ENCODE measurements at regions of chr16 and their contacts with region 1.

Region 1: GRCh38 chr16:27235055-27235937 is 32.0 kb downstream of the KDM8 start:
- DNase-seq: peak; percentile 66 to 97
- ATAC-seq: peak; percentile 43 to 68 (median 52)
- H3K4me3 ChIP-seq: no peak overlapping the region
- H3K4me3 Mint-ChIP-seq: peak overlapping the region; percentile 85
- H3K27ac ChIP-seq: peak overlapping the region; percentile 99
- H3K27ac Mint-ChIP-seq: peak overlapping the region; percentile 94 to 100
- H3K4me1 ChIP-seq: peaks cover 98% of the 10 kb centered on the region
- H3K4me1 Mint-ChIP-seq: peaks cover 75 to 77% of the 10 kb centered on the region in 2 donors
- H3K27me3 ChIP-seq: no peaks in the 10 kb centered on the region
- H3K27me3 Mint-ChIP-seq: no peaks in the 10 kb centered on the region
- CTCF ChIP-seq: peak; percentile 90

Region 2: DNA sequence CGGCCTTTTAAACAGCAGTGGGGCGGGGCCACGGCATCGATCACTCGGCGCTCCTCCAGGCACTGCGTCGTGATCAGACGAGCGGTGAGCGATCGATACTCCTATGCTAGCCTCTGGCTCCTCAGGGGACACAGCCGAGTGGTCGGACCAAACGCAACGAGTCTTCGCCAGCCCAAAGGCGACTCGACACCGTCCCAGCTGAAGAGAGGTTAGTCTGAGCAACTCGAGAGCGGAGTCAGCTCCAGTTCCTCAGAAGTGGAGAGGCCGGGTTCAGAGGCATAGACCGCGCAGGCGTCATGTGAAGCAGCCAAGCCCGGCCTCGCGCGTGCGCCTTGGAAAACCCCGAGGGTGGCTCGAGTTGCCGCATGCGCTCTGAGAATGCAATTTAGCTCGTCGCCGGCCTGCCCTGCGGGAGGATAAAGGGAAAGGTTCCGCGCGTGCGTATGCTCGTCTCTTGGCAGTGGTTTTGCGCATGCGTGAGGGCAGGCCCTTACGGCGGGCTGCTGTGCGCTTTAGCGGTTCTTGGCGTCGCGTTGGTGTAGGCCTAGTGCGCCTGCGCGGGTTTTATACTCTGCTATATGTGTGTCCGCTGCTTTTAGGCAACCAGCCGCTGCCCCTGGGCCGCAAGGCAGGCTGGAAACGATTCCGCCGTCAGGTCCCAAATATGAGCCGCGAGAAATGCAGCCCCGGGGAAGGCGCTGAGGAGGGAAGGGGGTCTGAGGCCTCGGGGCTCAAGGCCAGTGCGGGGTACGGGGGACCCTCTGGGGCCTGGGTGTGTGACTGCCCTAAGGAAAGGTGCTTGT is 31.7 kb before region 1 on chr16 and contains the start of gene KDM8:
- intact Hi-C with region 1: loop called (anchors 2 kb)
- DNase-seq: peak; percentile 98 to 100
- ATAC-seq: peak; percentile 80 to 92 (median 86)
- H3K4me3 ChIP-seq: peak within 1 kb of the TSS; percentile 97
- H3K4me3 Mint-ChIP-seq: peak within 1 kb of the TSS; percentile 97
- H3K27ac ChIP-seq: peak within 1 kb of the TSS; percentile 99
- H3K27ac Mint-ChIP-seq: peak within 1 kb of the TSS; percentile 96 to 98
- H3K4me1 ChIP-seq: peaks cover 36% of the 10 kb centered on the region
- H3K4me1 Mint-ChIP-seq: peaks cover 46 to 52% of the 10 kb centered on the region in 2 donors
- H3K27me3 ChIP-seq: no peaks in the 10 kb centered on the region
- H3K27me3 Mint-ChIP-seq: no peaks in the 10 kb centered on the region
- CTCF ChIP-seq: no peak
- total RNA-seq, gene KDM8: 11.4 to 17.9 (median 17.8) TPM

Region 3: DNA sequence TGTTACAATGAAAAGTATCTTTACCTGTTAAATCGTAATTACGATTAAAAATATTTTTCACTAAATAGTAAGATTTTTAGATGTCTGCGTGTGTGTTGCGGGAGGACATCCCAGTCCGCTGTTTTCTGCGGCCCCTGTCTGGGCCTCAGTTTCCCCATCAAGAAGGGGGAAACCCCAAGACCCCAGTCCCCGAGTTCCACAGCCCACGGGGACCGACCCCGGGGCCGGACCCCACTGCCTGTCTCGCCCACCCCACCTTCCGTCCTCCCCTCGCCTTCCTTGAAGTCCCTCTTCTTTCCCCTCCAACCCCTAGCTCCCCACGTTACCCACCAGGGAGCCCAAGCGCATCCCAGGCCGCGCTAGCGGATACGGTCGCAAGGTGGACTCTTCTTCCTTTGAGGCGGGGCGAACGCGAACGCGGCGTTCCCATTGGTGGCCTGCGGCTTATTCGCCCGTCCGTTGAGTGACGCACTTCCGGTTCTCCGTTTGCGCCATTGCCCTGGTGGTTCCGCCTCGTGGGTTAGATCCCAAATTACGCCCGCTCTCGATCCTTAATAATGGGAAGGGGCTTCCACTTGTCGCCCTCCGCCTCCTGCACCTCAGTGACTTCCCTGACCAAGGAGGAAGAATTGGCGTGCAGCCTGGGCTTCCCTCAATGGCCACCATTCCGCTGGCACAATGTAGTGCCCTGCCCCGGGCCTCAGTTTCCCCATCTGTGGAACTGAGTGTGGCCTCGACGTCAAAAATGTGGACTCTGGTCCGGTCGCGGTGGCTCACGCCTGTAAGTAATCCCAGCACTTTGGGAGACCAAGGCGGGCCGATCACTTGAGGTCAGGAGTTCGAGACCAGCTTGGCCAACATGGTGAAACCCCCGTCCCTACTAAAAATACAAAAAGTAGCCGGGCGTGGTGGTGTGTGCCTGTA is 33.3 kb after region 1 on chr16 and contains the start of gene NSMCE1:
- intact Hi-C with region 1: loop called (anchors 1 kb)
- DNase-seq: peak; percentile 98
- ATAC-seq: peak; percentile 97 to 100 (median 99)
- H3K4me3 ChIP-seq: peak within 1 kb of the TSS; percentile 86
- H3K4me3 Mint-ChIP-seq: peak within 1 kb of the TSS; percentile 97
- H3K27ac ChIP-seq: peak within 1 kb of the TSS; percentile 88
- H3K27ac Mint-ChIP-seq: peak within 1 kb of the TSS; percentile 96 to 99
- H3K4me1 ChIP-seq: peaks cover 23% of the 10 kb centered on the region
- H3K4me1 Mint-ChIP-seq: peaks cover 22 to 34% of the 10 kb centered on the region in 2 donors
- H3K27me3 ChIP-seq: no peaks in the 10 kb centered on the region
- H3K27me3 Mint-ChIP-seq: no peaks in the 10 kb centered on the region
- CTCF ChIP-seq: no peak
- total RNA-seq, gene NSMCE1: 29.4 to 42.7 (median 37.7) TPM

Region 4: GRCh38 chr16:27367461-27368357 is 132.4 kb after region 1 on chr16:
- intact Hi-C with region 1: loop called (anchors 1 kb)
- DNase-seq: peak; percentile 73 to 97
- ATAC-seq: peak; percentile 85 to 88 (median 87)
- H3K4me3 ChIP-seq: peak overlapping the region; percentile 2
- H3K4me3 Mint-ChIP-seq: peak overlapping the region; percentile 45
- H3K27ac ChIP-seq: peak overlapping the region; percentile 96
- H3K27ac Mint-ChIP-seq: peak overlapping the region; percentile 94 to 95
- H3K4me1 ChIP-seq: peaks cover 46% of the 10 kb centered on the region
- H3K4me1 Mint-ChIP-seq: peaks cover 0 to 28% of the 10 kb centered on the region in 2 donors
- H3K27me3 ChIP-seq: no peaks in the 10 kb centered on the region
- H3K27me3 Mint-ChIP-seq: no peaks in the 10 kb centered on the region
- CTCF ChIP-seq: peak; percentile 65

Region 5: GRCh38 chr16:27455700-27456099 is 220.4 kb after region 1 on chr16:
- intact Hi-C with region 1: loop called (anchors 2 kb)
- DNase-seq: peak in 1 of 2 donors; percentile 52
- ATAC-seq: no peak
- H3K4me3 ChIP-seq: no peak overlapping the region
- H3K4me3 Mint-ChIP-seq: no peak overlapping the region
- H3K27ac ChIP-seq: no peak overlapping the region
- H3K27ac Mint-ChIP-seq: peak overlapping the region; percentile 84 to 98
- H3K4me1 ChIP-seq: peaks cover 82% of the 10 kb centered on the region
- H3K4me1 Mint-ChIP-seq: peaks cover 45 to 59% of the 10 kb centered on the region in 2 donors
- H3K27me3 ChIP-seq: no peaks in the 10 kb centered on the region
- H3K27me3 Mint-ChIP-seq: no peaks in the 10 kb centered on the region
- CTCF ChIP-seq: no peak